ENCODE measurements at regions of chrX and their contacts with region 1.

Region 1: GRCh38 chrX:47873123-47873522 is 36.4 kb downstream of the ZNF81 start:
- DNase-seq: no peak
- ATAC-seq: no peak
- H3K4me3 ChIP-seq: no peak overlapping the region
- H3K27ac ChIP-seq: no peak overlapping the region
- H3K4me1 ChIP-seq: no peaks in the 10 kb centered on the region
- H3K27me3 ChIP-seq: peaks cover 0 to 4% (median 0%) of the 10 kb centered on the region in 7 donors
- CTCF ChIP-seq: no peak

Region 2: DNA sequence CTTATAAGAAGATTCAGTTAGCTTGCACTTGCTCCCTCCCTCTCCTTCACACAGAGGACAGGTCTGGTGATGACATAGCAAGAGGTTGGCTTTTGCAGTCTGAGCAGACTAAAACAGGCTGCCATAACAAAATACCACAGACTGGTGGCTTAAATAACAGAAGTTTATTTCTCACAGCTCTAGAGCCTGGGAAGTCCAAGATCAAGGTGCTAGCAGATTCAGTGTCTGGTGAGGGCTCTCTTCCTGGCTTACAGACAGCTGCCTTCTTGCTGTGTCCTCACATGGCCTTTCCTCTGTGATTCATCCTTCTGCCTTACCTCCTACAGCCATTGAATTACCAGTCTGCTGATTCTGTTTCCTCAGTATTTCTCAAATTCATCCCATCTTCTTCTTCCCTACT is 1023.2 kb before region 1 on chrX:
- intact Hi-C with region 1: loop called in 1 of 10 experiments (anchors 5 kb)
- DNase-seq: no peak
- ATAC-seq: no peak
- H3K4me3 ChIP-seq: no peak overlapping the region
- H3K27ac ChIP-seq: no peak overlapping the region
- H3K4me1 ChIP-seq: no peaks in the 10 kb centered on the region
- H3K27me3 ChIP-seq: no peaks in the 10 kb centered on the region
- CTCF ChIP-seq: no peak

Region 3: GRCh38 chrX:47936224-47936939 is 63.3 kb after region 1 on chrX:
- intact Hi-C with region 1: no loop called
- DNase-seq: no peak
- ATAC-seq: peak in 1 of 8 donors; percentile 28
- H3K4me3 ChIP-seq: peak overlapping the region in 6 of 10 donors; percentile 17 to 30 (median 23)
- H3K27ac ChIP-seq: no peak overlapping the region
- H3K4me1 ChIP-seq: no peaks in the 10 kb centered on the region
- H3K27me3 ChIP-seq: no peaks in the 10 kb centered on the region
- CTCF ChIP-seq: no peak